Activated CD4-positive, alpha-beta T cell treated with anti-CD3 and anti-CD28 coated beads, Interleukin-2, amount 10 ng/mL, durations not matched to agents 24 days and 14 days (primary cell): ENCODE measurements at regions of chr5 and their contacts with region 1.

Region 1: GRCh38 chr5:50751064-50751657 is 84.7 kb downstream of the PARP8 start:
- DNase-seq: peak; percentile 81
- H3K4me3 Mint-ChIP-seq: no peak overlapping the region
- H3K27ac Mint-ChIP-seq: no peak overlapping the region
- H3K4me1 Mint-ChIP-seq: peaks cover 26% of the 10 kb centered on the region
- H3K27me3 Mint-ChIP-seq: no peaks in the 10 kb centered on the region

Region 2: GRCh38 chr5:50325237-50325832 is 425.8 kb before region 1 on chr5:
- intact Hi-C with region 1: loop called (anchors 2 kb)
- DNase-seq: peak; percentile 66
- H3K4me3 Mint-ChIP-seq: no peak overlapping the region
- H3K27ac Mint-ChIP-seq: no peak overlapping the region
- H3K4me1 Mint-ChIP-seq: peaks cover 18% of the 10 kb centered on the region
- H3K27me3 Mint-ChIP-seq: peaks cover 2% of the 10 kb centered on the region

Region 3: DNA sequence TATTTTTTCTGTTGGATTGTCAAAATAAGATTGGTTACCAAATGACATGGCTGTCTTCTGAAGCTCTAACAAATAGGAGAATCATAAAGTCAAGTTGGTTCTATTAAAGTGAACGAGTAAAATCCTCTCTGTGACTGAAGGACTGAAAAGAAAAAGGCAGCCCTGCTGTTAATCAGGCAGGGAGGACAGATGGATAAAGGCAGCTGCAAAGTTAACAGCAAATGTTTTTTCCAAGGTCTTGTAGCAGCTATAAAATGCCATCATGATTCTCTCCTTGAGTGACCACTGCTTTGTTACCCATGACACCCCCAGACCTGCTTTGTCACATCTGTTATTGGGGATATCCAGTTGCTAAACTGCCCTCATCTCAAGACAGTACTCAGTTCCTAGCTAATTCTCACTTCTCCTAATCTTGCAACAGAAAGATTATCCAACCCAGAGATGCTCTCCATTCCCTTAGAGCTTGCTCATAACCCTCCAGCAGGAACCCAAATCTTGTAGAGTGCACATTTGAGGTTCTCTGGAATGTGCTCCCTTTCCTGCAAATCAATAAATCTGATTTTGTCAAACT is 174.4 kb before region 1 on chr5:
- intact Hi-C with region 1: no loop called
- DNase-seq: no peak
- H3K4me3 Mint-ChIP-seq: no peak overlapping the region
- H3K27ac Mint-ChIP-seq: no peak overlapping the region
- H3K4me1 Mint-ChIP-seq: peaks cover 6% of the 10 kb centered on the region
- H3K27me3 Mint-ChIP-seq: peaks cover 11% of the 10 kb centered on the region

Region 4: GRCh38 chr5:50889778-50890177 is 138.6 kb after region 1 on chr5:
- intact Hi-C with region 1: no loop called
- DNase-seq: no peak
- H3K4me3 Mint-ChIP-seq: no peak overlapping the region
- H3K27ac Mint-ChIP-seq: no peak overlapping the region
- H3K4me1 Mint-ChIP-seq: no peaks in the 10 kb centered on the region
- H3K27me3 Mint-ChIP-seq: no peaks in the 10 kb centered on the region